ENCODE measurements at regions of chr14 and their contacts with region 1.

Region 1: DNA sequence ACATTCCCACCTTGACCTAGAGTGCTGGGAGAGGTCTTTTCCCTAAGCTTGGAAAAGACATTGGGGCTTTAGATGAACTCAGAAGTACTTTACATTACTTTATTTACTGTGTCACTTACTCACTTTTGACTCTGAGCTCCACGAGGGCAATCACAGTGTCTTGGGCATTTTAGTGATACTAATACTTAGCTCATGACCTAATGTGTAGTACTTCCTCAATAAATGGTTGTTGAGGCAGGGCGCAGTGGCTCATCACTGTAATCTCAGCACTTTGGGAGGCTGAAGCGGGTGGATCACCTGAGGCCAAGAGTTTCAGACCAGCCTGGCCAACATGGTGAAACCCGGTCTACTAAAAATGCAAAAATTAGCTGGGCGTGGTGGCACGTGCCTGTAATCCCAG is 19.8 kb upstream of the SNAPC1 start:
- DNase-seq: no peak
- H3K4me3 ChIP-seq: no peak overlapping the region
- H3K4me3 Mint-ChIP-seq: no peak overlapping the region
- H3K27ac Mint-ChIP-seq: no peak overlapping the region
- H3K4me1 ChIP-seq: no peaks in the 10 kb centered on the region
- H3K4me1 Mint-ChIP-seq: no peaks in the 10 kb centered on the region
- H3K27me3 ChIP-seq: no peaks in the 10 kb centered on the region
- H3K27me3 Mint-ChIP-seq: no peaks in the 10 kb centered on the region
- CTCF ChIP-seq: no peak

Region 2: DNA sequence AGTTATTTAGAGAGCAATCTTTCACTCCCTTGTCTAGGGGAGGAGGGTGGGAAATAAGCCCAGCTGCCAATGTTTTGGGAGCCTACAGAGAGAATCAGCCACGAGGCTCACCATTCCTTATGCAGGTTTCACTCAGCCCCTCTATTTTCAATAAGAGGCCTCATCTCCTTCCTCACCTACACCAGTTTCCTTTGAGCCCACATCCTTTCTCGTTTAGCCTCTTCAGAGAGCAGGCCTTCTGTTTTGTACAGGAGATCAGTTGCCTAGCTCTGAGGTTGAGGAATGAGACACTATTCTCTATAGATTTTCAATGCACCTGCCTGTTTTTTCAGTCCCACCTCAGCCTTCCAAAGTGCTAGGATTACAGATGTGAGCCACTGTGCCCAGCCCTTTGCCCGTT is 37.8 kb after region 1 on chr14:
- CTCF ChIA-PET with region 1: no interaction called
- POLR2A ChIA-PET with region 1: no interaction called
- intact Hi-C with region 1: no loop called
- DNase-seq: no peak
- H3K4me3 ChIP-seq: no peak overlapping the region
- H3K4me3 Mint-ChIP-seq: no peak overlapping the region
- H3K27ac Mint-ChIP-seq: no peak overlapping the region
- H3K4me1 ChIP-seq: no peaks in the 10 kb centered on the region
- H3K4me1 Mint-ChIP-seq: no peaks in the 10 kb centered on the region
- H3K27me3 ChIP-seq: no peaks in the 10 kb centered on the region
- H3K27me3 Mint-ChIP-seq: no peaks in the 10 kb centered on the region
- CTCF ChIP-seq: no peak

Region 3: GRCh38 chr14:61822458-61822857 is 80.1 kb after region 1 on chr14:
- CTCF ChIA-PET with region 1: no interaction called
- POLR2A ChIA-PET with region 1: interaction called, 17 read pairs
- intact Hi-C with region 1: no loop called
- DNase-seq: no peak
- H3K4me3 ChIP-seq: no peak overlapping the region
- H3K4me3 Mint-ChIP-seq: no peak overlapping the region
- H3K27ac Mint-ChIP-seq: no peak overlapping the region
- H3K4me1 ChIP-seq: no peaks in the 10 kb centered on the region
- H3K4me1 Mint-ChIP-seq: no peaks in the 10 kb centered on the region
- H3K27me3 ChIP-seq: no peaks in the 10 kb centered on the region
- H3K27me3 Mint-ChIP-seq: peaks cover 4% of the 10 kb centered on the region
- CTCF ChIP-seq: no peak

Measured in Caco-2 (cell line).